MCF 10A (cell line): ENCODE measurements at regions of chr2 and their contacts with region 1.

Region 1: DNA sequence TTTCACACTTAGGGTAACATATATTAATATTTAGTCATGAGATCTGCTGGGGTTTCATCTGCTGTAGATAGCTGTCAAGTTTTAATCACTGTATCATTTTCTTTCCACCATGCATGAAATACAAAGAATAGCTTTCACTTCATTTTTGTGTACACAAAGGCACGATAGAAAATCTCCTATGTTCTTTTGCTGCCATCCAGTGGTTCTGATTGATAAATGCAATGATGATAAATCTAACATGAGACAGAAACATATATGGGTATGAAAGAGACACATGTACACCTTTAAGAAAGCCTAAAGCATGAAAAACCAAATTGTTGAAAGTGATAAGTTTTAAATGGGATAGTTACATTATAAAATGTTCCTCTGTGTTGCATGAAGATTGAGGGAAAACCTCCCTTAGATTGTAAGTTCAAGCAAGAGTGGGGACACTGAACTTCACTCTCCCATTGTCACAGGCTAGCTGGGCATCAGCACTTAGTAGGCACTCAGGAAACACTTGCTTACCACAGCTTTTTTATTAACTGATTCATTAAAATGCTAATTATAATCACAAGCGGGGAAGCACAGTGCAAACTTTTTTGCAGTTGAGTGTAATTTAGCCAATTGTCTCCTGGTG is 31.2 kb downstream of the C1D start:
- DNase-seq: peak; percentile 71
- H3K4me3 Mint-ChIP-seq: no peak overlapping the region
- H3K27ac Mint-ChIP-seq: no peak overlapping the region
- H3K4me1 Mint-ChIP-seq: peaks cover 5% of the 10 kb centered on the region
- H3K27me3 Mint-ChIP-seq: no peaks in the 10 kb centered on the region
- CTCF ChIP-seq: peak; percentile 66

Region 2: GRCh38 chr2:67215214-67216055 is 816.2 kb before region 1 on chr2:
- CTCF ChIA-PET with region 1: interaction called, 3 read pairs
- POLR2A ChIA-PET with region 1: no interaction called
- intact Hi-C with region 1: loop called (anchors 5 kb)
- DNase-seq: peak; percentile 76
- H3K4me3 Mint-ChIP-seq: peak overlapping the region; percentile 21
- H3K27ac Mint-ChIP-seq: peak overlapping the region; percentile 32
- H3K4me1 Mint-ChIP-seq: peaks cover 6% of the 10 kb centered on the region
- H3K27me3 Mint-ChIP-seq: no peaks in the 10 kb centered on the region
- CTCF ChIP-seq: peak; percentile 77

Region 3: GRCh38 chr2:67322353-67323001 is 709.2 kb before region 1 on chr2:
- CTCF ChIA-PET with region 1: no interaction called
- POLR2A ChIA-PET with region 1: no interaction called
- intact Hi-C with region 1: loop called (anchors 2 kb)
- DNase-seq: peak; percentile 76
- H3K4me3 Mint-ChIP-seq: no peak overlapping the region
- H3K27ac Mint-ChIP-seq: peak overlapping the region; percentile 57
- H3K4me1 Mint-ChIP-seq: peaks cover 6% of the 10 kb centered on the region
- H3K27me3 Mint-ChIP-seq: no peaks in the 10 kb centered on the region
- CTCF ChIP-seq: peak; percentile 44

Region 4: GRCh38 chr2:67716895-67717396 is 314.7 kb before region 1 on chr2:
- CTCF ChIA-PET with region 1: no interaction called
- POLR2A ChIA-PET with region 1: no interaction called
- intact Hi-C with region 1: loop called (anchors 5 kb)
- DNase-seq: no peak
- H3K4me3 Mint-ChIP-seq: no peak overlapping the region
- H3K27ac Mint-ChIP-seq: no peak overlapping the region
- H3K4me1 Mint-ChIP-seq: peaks cover 6% of the 10 kb centered on the region
- H3K27me3 Mint-ChIP-seq: no peaks in the 10 kb centered on the region
- CTCF ChIP-seq: no peak

Region 5: GRCh38 chr2:67840460-67841068 is 191.1 kb before region 1 on chr2:
- CTCF ChIA-PET with region 1: interaction called, 7 read pairs
- POLR2A ChIA-PET with region 1: interaction called, 15 read pairs
- intact Hi-C with region 1: loop called (anchors 1 kb)
- DNase-seq: peak; percentile 73
- H3K4me3 Mint-ChIP-seq: no peak overlapping the region
- H3K27ac Mint-ChIP-seq: no peak overlapping the region
- H3K4me1 Mint-ChIP-seq: peaks cover 7% of the 10 kb centered on the region
- H3K27me3 Mint-ChIP-seq: no peaks in the 10 kb centered on the region
- CTCF ChIP-seq: peak; percentile 90

Region 6: DNA sequence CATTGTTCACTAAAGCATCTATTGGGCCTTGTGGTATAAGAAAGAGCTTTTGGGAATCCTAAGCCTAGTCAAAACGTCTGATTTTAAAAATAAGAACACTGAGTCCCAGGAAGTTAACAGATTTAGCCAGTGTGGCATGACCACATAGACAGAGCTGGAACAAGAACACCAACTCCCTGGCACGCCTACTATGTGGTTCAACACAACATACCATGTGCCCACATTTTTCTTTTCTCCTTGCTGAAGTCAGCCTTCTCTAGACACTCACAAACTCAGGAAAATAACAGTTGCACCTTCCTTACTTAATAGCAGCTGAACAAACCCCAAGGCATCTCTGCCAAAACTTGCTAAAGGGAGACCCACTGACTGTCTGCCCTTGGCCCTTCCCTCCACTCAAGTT is 93.6 kb before region 1 on chr2:
- CTCF ChIA-PET with region 1: interaction called, 5 read pairs
- POLR2A ChIA-PET with region 1: interaction called, 13 read pairs
- intact Hi-C with region 1: no loop called
- DNase-seq: peak; percentile 11
- H3K4me3 Mint-ChIP-seq: no peak overlapping the region
- H3K27ac Mint-ChIP-seq: peak overlapping the region; percentile 96
- H3K4me1 Mint-ChIP-seq: peaks cover 21% of the 10 kb centered on the region
- H3K27me3 Mint-ChIP-seq: no peaks in the 10 kb centered on the region
- CTCF ChIP-seq: no peak

Region 7: DNA sequence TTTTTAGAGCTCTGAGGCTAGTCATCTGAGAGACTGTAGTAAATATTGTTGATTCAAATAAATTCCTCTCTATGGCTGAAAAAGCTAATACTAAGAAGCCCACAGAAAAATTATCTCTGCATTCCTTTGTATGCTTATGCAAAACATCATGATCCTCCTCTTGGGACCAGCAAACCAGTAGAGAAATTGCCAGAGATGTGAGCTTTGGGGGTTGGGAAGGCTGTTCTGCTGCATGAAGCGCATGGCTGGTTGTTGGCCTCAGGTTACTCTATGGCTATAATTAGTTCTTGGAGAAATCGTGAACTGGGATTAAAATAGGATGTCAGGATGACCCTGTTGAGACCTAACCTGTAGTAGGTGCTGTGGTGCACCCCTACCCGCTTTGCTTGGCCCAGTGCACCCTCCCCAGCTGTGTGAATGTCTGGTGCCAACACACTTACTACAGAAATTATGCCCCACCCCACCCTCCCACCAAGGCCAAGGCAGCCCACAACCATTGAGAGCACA is 66.7 kb after region 1 on chr2:
- CTCF ChIA-PET with region 1: no interaction called
- POLR2A ChIA-PET with region 1: no interaction called
- intact Hi-C with region 1: no loop called
- DNase-seq: no peak
- H3K4me3 Mint-ChIP-seq: no peak overlapping the region
- H3K27ac Mint-ChIP-seq: no peak overlapping the region
- H3K4me1 Mint-ChIP-seq: no peaks in the 10 kb centered on the region
- H3K27me3 Mint-ChIP-seq: no peaks in the 10 kb centered on the region
- CTCF ChIP-seq: no peak